ENCODE measurements at regions of chr9 and their contacts with region 1.

Region 1: GRCh38 chr9:113657703-113658544 is 194.4 kb downstream of the RGS3 start:
- DNase-seq: peak; percentile 81
- H3K4me3 ChIP-seq: no peak overlapping the region
- H3K27ac ChIP-seq: no peak overlapping the region
- H3K4me1 ChIP-seq: peaks cover 4% of the 10 kb centered on the region
- H3K27me3 ChIP-seq: peaks cover 5% of the 10 kb centered on the region
- CTCF ChIP-seq: peak; percentile 93

Region 2: GRCh38 chr9:113275157-113276131 is 382.5 kb before region 1 on chr9 and contains the starts of genes CDC26 and PRPF4:
- CTCF ChIA-PET with region 1: interaction called, 8 read pairs
- POLR2A ChIA-PET with region 1: no interaction called
- intact Hi-C with region 1: loop called (anchors 10 kb)
- DNase-seq: peak; percentile 99
- H3K4me3 ChIP-seq: peak within 1 kb of the TSS; percentile 75
- H3K27ac ChIP-seq: peak within 1 kb of the TSS; percentile 95
- H3K4me1 ChIP-seq: peaks cover 16% of the 10 kb centered on the region
- H3K27me3 ChIP-seq: no peaks in the 10 kb centered on the region
- CTCF ChIP-seq: no peak
- total RNA-seq, gene CDC26: 17.9 and 25.4 TPM in 2 replicates
- total RNA-seq, gene PRPF4: 54.4 and 59.8 TPM in 2 replicates

Region 3: GRCh38 chr9:113317777-113318176 is 340.1 kb before region 1 on chr9:
- CTCF ChIA-PET with region 1: no interaction called
- POLR2A ChIA-PET with region 1: no interaction called
- intact Hi-C with region 1: loop called (anchors 10 kb)
- DNase-seq: peak; percentile 23
- H3K4me3 ChIP-seq: no peak overlapping the region
- H3K27ac ChIP-seq: no peak overlapping the region
- H3K4me1 ChIP-seq: no peaks in the 10 kb centered on the region
- H3K27me3 ChIP-seq: no peaks in the 10 kb centered on the region
- CTCF ChIP-seq: 0 out of 2 replicates have a peak, but pooled peaks have one; percentile 22

Region 4: GRCh38 chr9:113446323-113446740 is 211.6 kb before region 1 on chr9:
- CTCF ChIA-PET with region 1: interaction called, 41 read pairs
- POLR2A ChIA-PET with region 1: interaction called, 4 read pairs
- intact Hi-C with region 1: loop called (anchors 2 kb)
- DNase-seq: peak; percentile 65
- H3K4me3 ChIP-seq: no peak overlapping the region
- H3K27ac ChIP-seq: no peak overlapping the region
- H3K4me1 ChIP-seq: no peaks in the 10 kb centered on the region
- H3K27me3 ChIP-seq: no peaks in the 10 kb centered on the region
- CTCF ChIP-seq: peak; percentile 71

Region 5: GRCh38 chr9:113828221-113828620 is 170.3 kb after region 1 on chr9:
- CTCF ChIA-PET with region 1: no interaction called
- POLR2A ChIA-PET with region 1: no interaction called
- intact Hi-C with region 1: no loop called
- DNase-seq: peak; percentile 18
- H3K4me3 ChIP-seq: no peak overlapping the region
- H3K27ac ChIP-seq: no peak overlapping the region
- H3K4me1 ChIP-seq: peaks cover 5% of the 10 kb centered on the region
- H3K27me3 ChIP-seq: no peaks in the 10 kb centered on the region
- CTCF ChIP-seq: no peak